ENCODE measurements at regions of chrX and their contacts with region 1.

Region 1: DNA sequence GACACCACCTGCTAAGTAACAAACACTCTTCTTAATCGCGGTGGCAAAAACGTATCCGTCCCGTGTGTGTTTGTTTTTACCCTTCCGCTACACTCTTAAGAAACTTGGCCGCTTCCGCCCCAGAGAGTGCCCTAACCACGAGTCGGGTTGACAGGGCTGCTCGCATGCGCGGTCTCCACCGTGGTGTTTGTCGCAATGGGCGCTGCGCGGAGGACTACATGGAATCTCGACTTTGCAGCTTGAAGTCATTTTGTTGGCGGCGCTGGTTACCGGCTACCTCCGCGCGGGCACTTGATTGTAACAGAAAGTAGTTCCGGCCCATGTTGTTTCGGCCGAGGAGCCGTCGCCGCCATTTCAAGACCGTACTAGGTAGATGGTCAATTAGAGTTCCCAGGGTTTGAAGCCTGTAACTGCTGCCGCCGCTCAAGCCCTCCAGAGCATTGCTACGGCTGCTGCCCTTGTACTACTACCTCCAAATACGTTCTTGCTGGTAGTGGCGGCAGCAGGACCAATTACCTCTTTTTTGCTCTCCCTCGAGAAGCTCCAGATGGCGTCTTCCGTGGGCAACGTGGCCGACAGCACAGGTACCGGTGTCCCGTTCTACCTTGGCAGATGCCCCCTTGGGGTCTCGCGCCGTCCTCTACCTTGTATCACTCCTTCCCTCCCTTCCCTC is at the start of gene OGT:
- DNase-seq: peak; percentile 91
- H3K4me3 ChIP-seq: peak within 1 kb of the TSS; percentile 60 to 67 (median 66)
- H3K27ac ChIP-seq: peak within 1 kb of the TSS; percentile 71
- H3K4me1 ChIP-seq: peaks cover 5% of the 10 kb centered on the region
- H3K27me3 ChIP-seq: no peaks in the 10 kb centered on the region
- CTCF ChIP-seq: no peak
- total RNA-seq, gene OGT: 180 to 217 TPM

Region 2: DNA sequence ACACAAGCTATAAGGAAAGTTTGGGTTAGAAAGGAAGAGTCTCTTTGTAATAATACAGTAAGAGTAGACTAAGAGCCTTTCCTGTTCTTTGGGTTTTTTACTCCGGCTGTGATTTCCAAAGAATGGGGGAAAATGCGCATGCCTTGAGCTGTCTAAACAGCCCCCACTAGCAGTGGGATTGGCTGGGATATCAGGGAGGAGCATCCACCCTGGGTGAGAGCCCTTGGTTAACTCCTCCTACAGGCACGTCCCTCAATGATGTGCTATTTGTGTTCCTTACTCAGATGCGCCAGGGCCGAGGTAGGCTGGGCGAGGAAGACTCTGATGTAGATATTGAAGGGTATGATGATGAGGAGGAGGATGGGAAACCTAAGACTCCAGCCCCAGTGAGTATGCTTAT is 74.0 kb before region 1 on chrX:
- CTCF ChIA-PET with region 1: no interaction called
- dilution Hi-C with region 1: no loop called
- in situ Hi-C with region 1: no loop called
- intact Hi-C with region 1: loop called (anchors 5 kb)
- DNase-seq: no peak
- H3K4me3 ChIP-seq: no peak overlapping the region
- H3K27ac ChIP-seq: no peak overlapping the region
- H3K4me1 ChIP-seq: no peaks in the 10 kb centered on the region
- H3K27me3 ChIP-seq: no peaks in the 10 kb centered on the region
- CTCF ChIP-seq: no peak

Region 3: GRCh38 chrX:71475785-71476540 is 56.9 kb before region 1 on chrX:
- CTCF ChIA-PET with region 1: no interaction called
- dilution Hi-C with region 1: no loop called
- in situ Hi-C with region 1: no loop called
- intact Hi-C with region 1: loop called (anchors 5 kb)
- DNase-seq: no peak
- H3K4me3 ChIP-seq: no peak overlapping the region
- H3K27ac ChIP-seq: no peak overlapping the region
- H3K4me1 ChIP-seq: no peaks in the 10 kb centered on the region
- H3K27me3 ChIP-seq: no peaks in the 10 kb centered on the region
- CTCF ChIP-seq: no peak

Region 4: GRCh38 chrX:71565474-71566041 is 32.7 kb after region 1 on chrX:
- CTCF ChIA-PET with region 1: no interaction called
- dilution Hi-C with region 1: no loop called
- in situ Hi-C with region 1: no loop called
- intact Hi-C with region 1: no loop called
- DNase-seq: no peak
- H3K4me3 ChIP-seq: no peak overlapping the region
- H3K27ac ChIP-seq: no peak overlapping the region
- H3K4me1 ChIP-seq: no peaks in the 10 kb centered on the region
- H3K27me3 ChIP-seq: no peaks in the 10 kb centered on the region
- CTCF ChIP-seq: no peak

Measured in mammary epithelial cell (primary cell).